ENCODE measurements at regions of chr11 and their contacts with region 1.

Region 1: DNA sequence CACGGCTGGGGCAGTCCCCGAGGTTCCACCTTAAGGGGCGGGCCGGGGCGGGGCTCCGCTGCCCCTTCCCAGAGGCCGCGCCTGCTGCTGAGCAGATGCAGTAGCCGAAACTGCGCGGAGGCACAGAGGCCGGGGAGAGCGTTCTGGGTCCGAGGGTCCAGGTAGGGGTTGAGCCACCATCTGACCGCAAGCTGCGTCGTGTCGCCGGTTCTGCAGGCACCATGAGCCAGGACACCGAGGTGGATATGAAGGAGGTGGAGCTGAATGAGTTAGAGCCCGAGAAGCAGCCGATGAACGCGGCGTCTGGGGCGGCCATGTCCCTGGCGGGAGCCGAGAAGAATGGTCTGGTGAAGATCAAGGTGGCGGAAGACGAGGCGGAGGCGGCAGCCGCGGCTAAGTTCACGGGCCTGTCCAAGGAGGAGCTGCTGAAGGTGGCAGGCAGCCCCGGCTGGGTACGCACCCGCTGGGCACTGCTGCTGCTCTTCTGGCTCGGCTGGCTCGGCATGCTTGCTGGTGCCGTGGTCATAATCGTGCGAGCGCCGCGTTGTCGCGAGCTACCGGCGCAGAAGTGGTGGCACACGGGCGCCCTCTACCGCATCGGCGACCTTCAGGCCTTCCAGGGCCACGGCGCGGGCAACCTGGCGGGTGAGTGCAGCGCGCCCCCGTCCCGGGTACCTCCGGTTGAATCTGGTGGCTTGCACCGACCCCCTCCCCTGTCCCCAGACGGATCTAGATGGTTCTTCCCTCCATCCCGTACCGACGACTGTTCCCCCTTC is at the start of gene SLC3A2:
- DNase-seq: peak; percentile 80 to 90 (median 87)
- ATAC-seq: peak; percentile 88
- H3K4me3 ChIP-seq: peak within 1 kb of the TSS; percentile 97
- H3K4me3 Mint-ChIP-seq: peak within 1 kb of the TSS; percentile 98 to 100 (median 100)
- H3K27ac ChIP-seq: peak within 1 kb of the TSS; percentile 94
- H3K27ac Mint-ChIP-seq: peak within 1 kb of the TSS; percentile 98 to 100 (median 99)
- H3K4me1 ChIP-seq: peaks cover 34 to 35% of the 10 kb centered on the region in 2 donors
- H3K4me1 Mint-ChIP-seq: peaks cover 34 to 60% (median 53%) of the 10 kb centered on the region in 7 donors
- H3K27me3 ChIP-seq: no peaks in the 10 kb centered on the region
- H3K27me3 Mint-ChIP-seq: peaks cover 0 to 4% (median 0%) of the 10 kb centered on the region in 5 donors
- total RNA-seq, gene SLC3A2: 159 to 239 (median 218) TPM

Region 2: GRCh38 chr11:62400760-62401159 is 480.2 kb before region 1 on chr11:
- CTCF ChIA-PET with region 1: no interaction called
- POLR2A ChIA-PET with region 1: no interaction called
- intact Hi-C with region 1: loop called in 1 of 2 experiments (anchors 5 kb)
- DNase-seq: no peak
- ATAC-seq: no peak
- H3K4me3 ChIP-seq: no peak overlapping the region
- H3K4me3 Mint-ChIP-seq: peak overlapping the region in 6 of 10 donors; percentile 78 to 90 (median 86)
- H3K27ac ChIP-seq: peak overlapping the region; percentile 35
- H3K27ac Mint-ChIP-seq: peak overlapping the region in 6 of 9 donors; percentile 21 to 89 (median 82)
- H3K4me1 ChIP-seq: peaks cover 18 to 44% of the 10 kb centered on the region in 2 donors
- H3K4me1 Mint-ChIP-seq: peaks cover 24 to 63% (median 47%) of the 10 kb centered on the region in 7 donors
- H3K27me3 ChIP-seq: no peaks in the 10 kb centered on the region
- H3K27me3 Mint-ChIP-seq: no peaks in the 10 kb centered on the region

Region 3: GRCh38 chr11:62536301-62536957 is 344.6 kb before region 1 on chr11:
- CTCF ChIA-PET with region 1: no interaction called
- POLR2A ChIA-PET with region 1: no interaction called
- intact Hi-C with region 1: no loop called
- DNase-seq: no peak
- ATAC-seq: no peak
- H3K4me3 ChIP-seq: no peak overlapping the region
- H3K4me3 Mint-ChIP-seq: no peak overlapping the region
- H3K27ac ChIP-seq: no peak overlapping the region
- H3K27ac Mint-ChIP-seq: peak overlapping the region in 2 of 9 donors; percentile 33 to 43
- H3K4me1 ChIP-seq: peaks cover 13 to 33% of the 10 kb centered on the region in 2 donors
- H3K4me1 Mint-ChIP-seq: peaks cover 15 to 30% (median 22%) of the 10 kb centered on the region in 7 donors
- H3K27me3 ChIP-seq: no peaks in the 10 kb centered on the region
- H3K27me3 Mint-ChIP-seq: no peaks in the 10 kb centered on the region

Region 4: GRCh38 chr11:62665075-62665598 is 215.9 kb before region 1 on chr11 and contains the starts of genes C11orf98 and CSKMT:
- CTCF ChIA-PET with region 1: interaction called, 4 read pairs
- POLR2A ChIA-PET with region 1: interaction called, 10 read pairs
- intact Hi-C with region 1: no loop called
- DNase-seq: peak; percentile 90 to 99 (median 95)
- ATAC-seq: peak; percentile 97
- H3K4me3 ChIP-seq: peak within 1 kb of the TSS; percentile 85
- H3K4me3 Mint-ChIP-seq: peak within 1 kb of the TSS; percentile 93 to 98 (median 96)
- H3K27ac ChIP-seq: peak within 1 kb of the TSS; percentile 85
- H3K27ac Mint-ChIP-seq: peak within 1 kb of the TSS; percentile 89 to 97 (median 93)
- H3K4me1 ChIP-seq: peaks cover 16 to 21% of the 10 kb centered on the region in 2 donors
- H3K4me1 Mint-ChIP-seq: peaks cover 13 to 45% (median 32%) of the 10 kb centered on the region in 7 donors
- H3K27me3 ChIP-seq: no peaks in the 10 kb centered on the region
- H3K27me3 Mint-ChIP-seq: no peaks in the 10 kb centered on the region
- total RNA-seq, gene C11orf98: 23.2 to 103 (median 47.6) TPM
- total RNA-seq, gene CSKMT: 8.9 to 29.3 (median 23.7) TPM

Region 5: DNA sequence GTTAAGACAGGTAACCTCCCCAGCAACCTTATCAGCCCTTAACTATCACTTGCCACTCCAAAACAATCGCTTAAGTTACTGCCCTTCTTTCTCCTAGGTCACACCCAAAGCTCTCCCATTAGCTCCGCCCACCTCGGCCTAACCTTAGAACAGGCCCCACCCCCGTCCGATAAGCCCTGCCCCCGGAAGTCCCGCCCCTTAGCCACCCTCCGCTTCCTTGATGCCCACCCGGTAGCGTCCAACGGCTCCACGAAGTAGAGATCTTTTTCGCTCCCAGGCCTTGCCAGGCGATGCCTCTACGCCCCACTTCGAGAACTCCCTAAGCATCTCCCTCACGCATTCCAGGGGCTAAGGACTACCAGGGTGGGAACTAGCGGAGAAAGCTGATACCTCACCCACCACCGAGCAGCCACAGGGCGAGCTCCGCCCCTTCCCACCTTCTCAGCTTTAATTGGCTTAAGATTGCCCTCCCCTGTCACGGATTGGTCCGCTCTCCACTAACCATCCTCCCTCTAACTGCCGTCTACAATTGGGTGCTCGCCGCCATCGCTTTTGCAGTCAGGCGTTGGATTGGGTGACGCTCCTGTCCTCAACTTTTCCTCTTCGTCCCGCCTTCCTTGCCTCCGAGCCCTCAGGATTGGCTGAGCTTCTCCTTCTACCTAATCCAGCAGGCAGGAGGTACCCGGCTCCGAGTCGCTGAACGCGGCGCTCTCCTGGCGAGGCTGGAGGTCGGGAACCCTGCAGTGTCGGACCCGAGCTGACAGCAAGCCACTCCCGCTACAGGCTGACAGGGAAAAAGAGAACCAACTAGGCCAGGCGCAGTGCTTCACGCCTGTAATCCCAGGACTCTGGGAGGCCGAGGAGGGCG is 127.0 kb before region 1 on chr11 and contains the start of gene ZBTB3:
- CTCF ChIA-PET with region 1: interaction called, 3 read pairs
- POLR2A ChIA-PET with region 1: interaction called, 25 read pairs
- intact Hi-C with region 1: loop called (anchors 1 kb)
- DNase-seq: peak; percentile 89 to 99 (median 98)
- ATAC-seq: peak; percentile 96
- H3K4me3 ChIP-seq: peak within 1 kb of the TSS; percentile 94
- H3K4me3 Mint-ChIP-seq: peak within 1 kb of the TSS; percentile 86 to 100 (median 98)
- H3K27ac ChIP-seq: peak within 1 kb of the TSS; percentile 83
- H3K27ac Mint-ChIP-seq: peak within 1 kb of the TSS; percentile 93 to 99 (median 95)
- H3K4me1 ChIP-seq: peaks cover 15 to 16% of the 10 kb centered on the region in 2 donors
- H3K4me1 Mint-ChIP-seq: peaks cover 9 to 41% (median 29%) of the 10 kb centered on the region in 7 donors
- H3K27me3 ChIP-seq: no peaks in the 10 kb centered on the region
- H3K27me3 Mint-ChIP-seq: no peaks in the 10 kb centered on the region
- total RNA-seq, gene ZBTB3: 6.4 to 24.1 (median 19.0) TPM

Region 6: DNA sequence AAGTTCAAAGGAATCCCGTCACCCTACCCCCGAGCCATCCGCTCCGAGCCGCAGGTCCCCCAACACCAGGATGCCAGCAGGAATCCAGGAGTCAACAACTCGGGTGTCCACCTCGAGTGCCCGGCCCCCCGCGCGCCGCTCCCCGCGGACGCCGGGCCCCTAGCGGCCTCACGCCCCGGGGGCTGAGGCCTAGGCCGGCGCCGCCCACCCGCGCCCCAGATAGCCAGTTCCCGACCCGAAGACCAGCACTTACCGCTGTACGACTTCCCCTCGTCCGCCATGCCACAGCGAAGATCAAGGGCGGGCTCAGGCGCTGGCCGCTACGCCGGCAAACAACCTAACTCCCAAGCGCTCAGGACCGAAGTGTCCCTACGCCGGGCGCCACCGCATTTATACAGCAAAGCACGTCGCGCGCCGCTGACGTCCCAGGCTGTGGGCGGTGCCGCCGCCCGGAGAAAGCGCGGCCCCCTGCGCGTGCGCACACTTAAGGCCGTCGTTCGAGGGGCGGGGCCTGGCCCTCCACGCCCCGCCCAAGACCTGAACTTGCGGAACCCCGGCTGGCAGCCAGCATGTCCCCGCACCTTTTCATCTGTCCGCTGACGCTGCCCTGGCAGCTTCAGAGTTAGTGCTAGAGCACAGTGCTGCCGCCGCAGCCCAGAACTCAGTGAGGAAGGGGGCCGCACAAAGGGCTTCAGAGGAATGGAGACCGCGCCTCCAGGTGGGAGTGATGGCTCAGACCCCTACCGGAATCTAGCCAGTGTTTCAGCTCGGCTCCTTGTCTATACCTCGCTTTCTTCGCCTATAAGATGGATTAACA is 75.7 kb before region 1 on chr11 and contains the start of gene NXF1:
- CTCF ChIA-PET with region 1: no interaction called
- POLR2A ChIA-PET with region 1: interaction called, 9 read pairs
- intact Hi-C with region 1: loop called (anchors 1 kb)
- DNase-seq: peak; percentile 91 to 99 (median 97)
- ATAC-seq: peak; percentile 92
- H3K4me3 ChIP-seq: peak within 1 kb of the TSS; percentile 87
- H3K4me3 Mint-ChIP-seq: peak within 1 kb of the TSS; percentile 90 to 100 (median 99)
- H3K27ac ChIP-seq: peak within 1 kb of the TSS; percentile 97
- H3K27ac Mint-ChIP-seq: peak within 1 kb of the TSS; percentile 95 to 100 (median 99)
- H3K4me1 ChIP-seq: peaks cover 13 to 18% of the 10 kb centered on the region in 2 donors
- H3K4me1 Mint-ChIP-seq: peaks cover 17 to 55% (median 34%) of the 10 kb centered on the region in 7 donors
- H3K27me3 ChIP-seq: no peaks in the 10 kb centered on the region
- H3K27me3 Mint-ChIP-seq: peaks cover 0 to 2% (median 0%) of the 10 kb centered on the region in 5 donors
- total RNA-seq, gene NXF1: 92.1 to 421 (median 195) TPM

Region 7: GRCh38 chr11:62860835-62861563 is 20.0 kb before region 1 on chr11:
- CTCF ChIA-PET with region 1: interaction called, 7 read pairs
- POLR2A ChIA-PET with region 1: interaction called, 99 read pairs
- intact Hi-C with region 1: loop called (anchors 1 kb)
- DNase-seq: no peak
- ATAC-seq: no peak
- H3K4me3 ChIP-seq: no peak overlapping the region
- H3K4me3 Mint-ChIP-seq: no peak overlapping the region
- H3K27ac ChIP-seq: no peak overlapping the region
- H3K27ac Mint-ChIP-seq: peak overlapping the region in 2 of 9 donors; percentile 58 to 59
- H3K4me1 ChIP-seq: peaks cover 5 to 8% of the 10 kb centered on the region in 2 donors
- H3K4me1 Mint-ChIP-seq: peaks cover 7 to 54% (median 17%) of the 10 kb centered on the region in 7 donors
- H3K27me3 ChIP-seq: no peaks in the 10 kb centered on the region
- H3K27me3 Mint-ChIP-seq: peaks cover 0 to under 1% (median 0%) of the 10 kb centered on the region in 5 donors